Posterior cingulate gyrus (tissue), 11 donors: ENCODE measurements at regions of chr1 and their contacts with region 1.

Region 1: DNA sequence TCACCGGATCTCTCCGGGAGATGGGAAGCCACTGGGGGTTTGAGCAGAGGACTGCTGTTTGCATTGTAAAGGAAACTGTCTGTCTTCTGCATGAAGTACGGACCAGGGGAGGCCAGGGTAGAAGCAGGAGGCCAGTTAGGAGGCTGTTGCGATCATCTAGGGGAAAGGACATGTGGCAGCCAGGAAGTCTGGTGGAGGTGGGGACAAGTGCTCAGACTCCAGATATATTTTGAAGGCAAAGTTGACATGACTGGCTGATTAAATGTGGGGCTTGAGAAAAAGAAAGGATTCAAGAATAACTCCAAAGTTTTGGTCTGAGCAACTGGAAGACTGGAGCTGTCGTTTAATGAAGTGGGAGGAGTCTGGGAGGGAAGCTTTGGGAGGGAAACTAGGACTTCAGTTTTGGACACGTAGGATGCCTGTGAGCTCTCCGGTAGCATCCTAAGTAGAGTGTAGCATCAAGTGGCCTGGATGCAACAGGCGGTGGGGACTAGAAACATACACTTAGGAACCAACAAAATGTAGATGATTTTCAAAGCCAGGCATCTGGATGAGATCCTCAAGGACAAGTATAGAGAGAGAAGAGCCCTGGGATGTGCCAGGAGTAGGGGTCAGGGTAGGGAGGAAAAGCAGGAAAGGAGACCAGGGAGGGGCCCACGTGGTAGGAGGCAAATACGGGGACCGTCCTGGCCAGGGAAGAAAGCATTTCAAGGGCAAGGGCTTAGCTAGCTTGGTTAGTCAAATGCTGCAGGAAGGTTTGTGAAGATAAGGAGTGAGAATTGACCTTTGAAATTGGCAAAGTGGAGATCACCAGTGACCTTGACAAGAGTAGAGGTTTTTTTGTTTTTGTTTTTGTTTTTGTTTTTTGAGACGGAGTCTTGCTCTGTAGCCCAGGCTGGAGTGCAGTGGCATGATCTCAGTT is 3.7 kb upstream of the C1orf210 start:
- DNase-seq: peak in 2 of 10 donors; percentile 6 to 55

Region 2: GRCh38 chr1:43267818-43268425 is 21.1 kb before region 1 on chr1:
- intact Hi-C with region 1: loop called (anchors 1 kb)
- DNase-seq: peak in 1 of 10 donors; percentile 27